Right ventricle myocardium inferior (tissue), 1 donor: ENCODE measurements at regions of chr11 and their contacts with region 1.

Region 1: DNA sequence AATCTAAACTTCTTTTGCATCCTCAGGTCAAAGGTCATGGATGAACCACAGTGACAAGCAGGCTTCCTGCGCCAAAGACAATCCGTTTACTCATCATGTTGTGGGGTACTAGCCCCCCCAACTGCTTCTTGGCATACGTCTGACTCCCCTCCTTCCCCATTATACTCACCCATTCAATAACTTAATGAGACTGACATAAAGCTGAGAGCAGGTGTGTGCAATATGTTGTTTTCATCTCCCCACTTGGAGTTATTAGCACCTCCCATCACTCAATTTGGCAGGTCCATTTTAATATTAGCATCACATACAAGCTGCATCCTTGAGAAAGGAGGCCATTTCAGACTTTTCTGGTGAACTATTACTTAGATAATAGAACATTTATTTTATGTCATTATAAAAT is 157.1 kb downstream of the CADM1 start:
- DNase-seq: no peak
- ATAC-seq: no peak

Region 2: GRCh38 chr11:115418626-115419025 is 71.5 kb after region 1 on chr11:
- intact Hi-C with region 1: loop called (anchors 5 kb)
- DNase-seq: no peak
- ATAC-seq: no peak